PC-9 (cell line): ENCODE measurements at regions of chr2 and their contacts with region 1.

Region 1: DNA sequence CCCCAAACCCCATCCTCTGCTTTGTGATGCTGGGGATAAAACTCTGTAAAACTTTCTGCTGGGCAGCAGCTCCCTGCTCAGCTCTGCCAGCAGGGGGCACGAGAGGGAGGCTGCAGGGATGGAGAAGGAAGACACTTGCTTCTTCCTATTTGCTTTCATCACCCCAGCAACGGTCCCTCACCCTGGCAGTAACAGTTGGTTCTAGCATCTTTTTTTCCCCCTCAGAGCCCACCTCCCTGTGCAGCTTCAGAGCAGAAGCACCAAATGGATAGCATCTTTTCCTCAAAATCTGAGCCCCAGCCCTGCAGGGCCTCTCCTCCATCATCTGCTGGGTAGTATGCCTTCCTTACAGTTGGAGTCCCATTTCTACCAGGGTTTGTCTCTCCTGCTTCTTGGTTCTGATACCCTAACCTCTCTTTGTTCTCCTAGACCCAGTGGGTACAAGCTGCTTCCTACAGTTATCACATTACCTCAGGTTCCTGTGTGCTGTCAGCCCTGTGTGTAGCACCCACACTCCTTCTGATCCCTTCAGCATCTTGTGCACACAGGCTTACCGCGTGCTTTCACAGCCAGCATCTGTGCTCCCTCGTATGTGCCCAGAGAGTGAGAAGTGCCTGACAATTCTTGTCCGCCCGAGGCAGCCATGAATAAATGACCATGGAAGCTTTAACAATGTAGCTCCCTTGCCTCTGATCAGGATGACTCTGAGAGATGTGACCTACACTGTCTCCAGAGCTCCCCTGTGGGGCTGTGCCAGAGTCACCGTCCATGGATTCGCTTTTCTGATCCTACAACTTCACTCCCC is 14.5 kb downstream of the CKAP2L start:
- DNase-seq: peak in 1 of 2 experiments; percentile 70
- H3K4me3 ChIP-seq: no peak overlapping the region
- H3K27ac ChIP-seq: no peak overlapping the region
- H3K4me1 ChIP-seq: no peaks in the 10 kb centered on the region
- H3K27me3 ChIP-seq: no peaks in the 10 kb centered on the region
- CTCF ChIP-seq: peak; percentile 94

Region 2: GRCh38 chr2:112884869-112885505 is 135.0 kb after region 1 on chr2:
- CTCF ChIA-PET with region 1: interaction called, 6 read pairs
- POLR2A ChIA-PET with region 1: no interaction called
- intact Hi-C with region 1: loop called (anchors 5 kb)
- DNase-seq: peak in 1 of 2 experiments; percentile 56
- H3K4me3 ChIP-seq: no peak overlapping the region
- H3K27ac ChIP-seq: no peak overlapping the region
- H3K4me1 ChIP-seq: peaks cover 19% of the 10 kb centered on the region
- H3K27me3 ChIP-seq: no peaks in the 10 kb centered on the region
- CTCF ChIP-seq: peak; percentile 97

Region 3: GRCh38 chr2:112985090-112985489 is 235.1 kb after region 1 on chr2:
- CTCF ChIA-PET with region 1: no interaction called
- POLR2A ChIA-PET with region 1: no interaction called
- intact Hi-C with region 1: no loop called
- DNase-seq: no peak
- H3K4me3 ChIP-seq: no peak overlapping the region
- H3K27ac ChIP-seq: no peak overlapping the region
- H3K4me1 ChIP-seq: no peaks in the 10 kb centered on the region
- H3K27me3 ChIP-seq: no peaks in the 10 kb centered on the region
- CTCF ChIP-seq: no peak